CD14-positive monocyte (primary cell): ENCODE measurements at regions of chr5 and their contacts with region 1.

Region 1: GRCh38 chr5:115586601-115587048 is 15.7 kb downstream of the TICAM2 start:
- DNase-seq: peak; percentile 17 to 53 (median 24)
- H3K4me3 ChIP-seq: no peak overlapping the region
- H3K4me3 Mint-ChIP-seq: no peak overlapping the region
- H3K27ac ChIP-seq: no peak overlapping the region
- H3K27ac Mint-ChIP-seq: no peak overlapping the region
- H3K4me1 ChIP-seq: peaks cover 0 to 3% of the 10 kb centered on the region in 2 donors
- H3K4me1 Mint-ChIP-seq: peaks cover 5% of the 10 kb centered on the region
- H3K27me3 ChIP-seq: no peaks in the 10 kb centered on the region
- H3K27me3 Mint-ChIP-seq: peaks cover 1 to 3% (median 2%) of the 10 kb centered on the region in 3 donors
- CTCF ChIP-seq: peak; percentile 83

Region 2: DNA sequence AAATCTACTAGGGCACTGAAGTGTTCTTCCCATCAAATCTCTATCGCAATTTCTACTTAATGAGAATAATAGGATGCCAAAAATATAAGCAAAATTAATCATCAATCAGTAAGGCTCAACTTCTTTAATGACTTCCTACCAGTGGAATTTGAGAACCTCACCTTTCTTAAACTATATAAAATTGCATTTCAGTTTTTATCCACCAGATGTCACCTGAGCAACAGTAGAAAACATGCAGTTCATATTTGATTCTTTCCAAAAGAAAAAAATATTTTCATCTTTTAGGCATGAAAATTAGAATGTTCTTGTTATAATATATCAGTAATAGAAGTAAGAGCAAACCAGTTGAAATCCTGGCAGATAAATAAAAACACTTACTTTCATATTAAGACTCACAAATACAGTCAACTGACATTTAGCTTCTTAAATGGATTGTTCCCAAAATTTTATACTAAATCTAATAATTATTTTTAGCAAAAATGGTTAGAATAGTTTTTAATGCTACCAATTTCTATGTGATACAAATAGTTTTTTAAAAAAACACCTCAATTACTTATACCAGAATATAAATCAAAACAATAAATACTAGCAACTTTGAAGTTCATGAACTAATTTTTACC is 276.8 kb before region 1 on chr5:
- intact Hi-C with region 1: loop called (anchors 2 to 5 kb)
- DNase-seq: peak; percentile 24 to 57 (median 24)
- H3K4me3 ChIP-seq: no peak overlapping the region
- H3K4me3 Mint-ChIP-seq: no peak overlapping the region
- H3K27ac ChIP-seq: no peak overlapping the region
- H3K27ac Mint-ChIP-seq: no peak overlapping the region
- H3K4me1 ChIP-seq: no peaks in the 10 kb centered on the region
- H3K4me1 Mint-ChIP-seq: no peaks in the 10 kb centered on the region
- H3K27me3 ChIP-seq: peaks cover 12 to 20% of the 10 kb centered on the region in 2 donors
- H3K27me3 Mint-ChIP-seq: peaks cover 5 to 17% (median 6%) of the 10 kb centered on the region in 3 donors
- CTCF ChIP-seq: peak; percentile 74

Region 3: GRCh38 chr5:115472271-115473025 is 114.2 kb before region 1 on chr5:
- intact Hi-C with region 1: no loop called
- DNase-seq: peak; percentile 18 to 47 (median 44)
- H3K4me3 ChIP-seq: peak overlapping the region in 1 of 3 experiments; percentile 25
- H3K4me3 Mint-ChIP-seq: peak overlapping the region in 1 of 2 donors; percentile 74
- H3K27ac ChIP-seq: peak overlapping the region; percentile 57 to 66
- H3K27ac Mint-ChIP-seq: peak overlapping the region; percentile 70 to 96 (median 85)
- H3K4me1 ChIP-seq: peaks cover 39 to 52% of the 10 kb centered on the region in 2 donors
- H3K4me1 Mint-ChIP-seq: peaks cover 45% of the 10 kb centered on the region
- H3K27me3 ChIP-seq: no peaks in the 10 kb centered on the region
- H3K27me3 Mint-ChIP-seq: peaks cover 0 to 5% (median 1%) of the 10 kb centered on the region in 3 donors
- CTCF ChIP-seq: no peak

Region 4: GRCh38 chr5:115530426-115530825 is 56.2 kb before region 1 on chr5:
- intact Hi-C with region 1: loop called in 1 of 2 experiments (anchors 10 kb)
- DNase-seq: no peak
- H3K4me3 ChIP-seq: no peak overlapping the region
- H3K4me3 Mint-ChIP-seq: no peak overlapping the region
- H3K27ac ChIP-seq: no peak overlapping the region
- H3K27ac Mint-ChIP-seq: no peak overlapping the region
- H3K4me1 ChIP-seq: peaks cover 2 to 12% of the 10 kb centered on the region in 2 donors
- H3K4me1 Mint-ChIP-seq: peaks cover 27% of the 10 kb centered on the region
- H3K27me3 ChIP-seq: no peaks in the 10 kb centered on the region
- H3K27me3 Mint-ChIP-seq: no peaks in the 10 kb centered on the region
- CTCF ChIP-seq: no peak

Region 5: DNA sequence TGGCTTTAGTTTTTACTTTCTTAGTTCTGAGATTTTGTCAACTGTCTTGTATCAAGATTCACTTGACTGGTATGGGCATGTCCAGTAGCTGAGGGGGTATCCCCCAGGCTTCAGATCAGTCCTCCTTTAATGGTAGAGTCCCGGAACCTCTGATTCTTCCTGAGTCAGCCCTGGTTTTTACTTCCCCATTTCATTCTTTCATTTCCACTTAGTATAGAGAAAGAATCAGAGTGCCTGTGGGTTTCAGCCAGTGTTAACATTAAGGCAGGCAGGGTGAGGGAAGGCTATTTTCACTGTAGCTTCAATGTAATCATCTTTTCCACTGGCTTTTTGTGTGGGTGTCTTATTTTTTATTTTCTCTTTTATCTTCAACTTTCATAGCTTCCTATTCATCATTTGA is 489.9 kb after region 1 on chr5:
- intact Hi-C with region 1: no loop called
- DNase-seq: peak; percentile 42 to 77 (median 67)
- H3K4me3 ChIP-seq: peak overlapping the region in 1 of 3 experiments; percentile 3
- H3K4me3 Mint-ChIP-seq: peak overlapping the region; percentile 0 to 55
- H3K27ac ChIP-seq: peak overlapping the region in 1 of 2 donors; percentile 11
- H3K27ac Mint-ChIP-seq: peak overlapping the region in 6 of 7 donors; percentile 5 to 80 (median 33)
- H3K4me1 ChIP-seq: peaks cover 14 to 15% of the 10 kb centered on the region in 2 donors
- H3K4me1 Mint-ChIP-seq: peaks cover 20% of the 10 kb centered on the region
- H3K27me3 ChIP-seq: no peaks in the 10 kb centered on the region
- H3K27me3 Mint-ChIP-seq: no peaks in the 10 kb centered on the region
- CTCF ChIP-seq: no peak